Activated CD4-positive, alpha-beta T cell treated with anti-CD3 and anti-CD28 coated beads, Interleukin-2, amount 10 ng/mL, durations not matched to agents 24 days and 14 days (primary cell): ENCODE measurements at regions of chr5 and their contacts with region 1.

Region 1: DNA sequence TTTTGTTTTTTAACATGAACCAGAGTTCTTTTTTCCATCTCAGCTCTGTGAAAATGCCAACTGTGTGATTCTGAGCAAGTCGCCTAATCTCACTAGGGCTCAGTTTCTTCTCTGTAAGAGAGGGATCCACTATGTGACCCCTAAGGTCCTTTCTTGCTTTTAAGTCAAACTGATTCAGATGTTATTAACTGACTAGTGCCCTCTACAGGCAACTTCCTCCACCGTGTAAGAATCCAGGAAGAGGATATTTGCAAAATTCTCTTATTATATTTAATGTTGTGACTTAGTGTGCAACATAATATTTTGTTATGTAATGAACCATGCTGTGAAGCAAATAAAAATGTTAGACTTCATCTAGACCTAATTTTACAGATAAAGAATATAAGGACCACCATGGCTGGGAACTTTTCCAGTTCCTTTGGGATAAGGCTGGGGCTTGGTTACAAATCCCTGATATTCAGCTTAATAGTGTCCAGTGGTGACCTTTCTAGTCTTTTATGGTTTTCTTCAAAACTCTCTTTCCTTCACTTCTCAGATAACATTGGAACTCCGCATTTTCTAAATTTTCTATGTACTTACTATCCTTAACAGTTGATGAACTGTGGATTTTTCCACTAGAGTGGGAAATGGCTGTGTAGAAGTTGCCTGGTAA is 244.7 kb downstream of the PIK3R1 start:
- DNase-seq: peak; percentile 83
- H3K4me3 Mint-ChIP-seq: no peak overlapping the region
- H3K27ac Mint-ChIP-seq: no peak overlapping the region
- H3K4me1 Mint-ChIP-seq: peaks cover 17% of the 10 kb centered on the region
- H3K27me3 Mint-ChIP-seq: peaks cover under 1% of the 10 kb centered on the region

Region 2: GRCh38 chr5:68343421-68343826 is 116.8 kb before region 1 on chr5:
- intact Hi-C with region 1: loop called (anchors 1 kb)
- DNase-seq: peak; percentile 68
- H3K4me3 Mint-ChIP-seq: no peak overlapping the region
- H3K27ac Mint-ChIP-seq: no peak overlapping the region
- H3K4me1 Mint-ChIP-seq: peaks cover 34% of the 10 kb centered on the region
- H3K27me3 Mint-ChIP-seq: peaks cover 18% of the 10 kb centered on the region

Region 3: DNA sequence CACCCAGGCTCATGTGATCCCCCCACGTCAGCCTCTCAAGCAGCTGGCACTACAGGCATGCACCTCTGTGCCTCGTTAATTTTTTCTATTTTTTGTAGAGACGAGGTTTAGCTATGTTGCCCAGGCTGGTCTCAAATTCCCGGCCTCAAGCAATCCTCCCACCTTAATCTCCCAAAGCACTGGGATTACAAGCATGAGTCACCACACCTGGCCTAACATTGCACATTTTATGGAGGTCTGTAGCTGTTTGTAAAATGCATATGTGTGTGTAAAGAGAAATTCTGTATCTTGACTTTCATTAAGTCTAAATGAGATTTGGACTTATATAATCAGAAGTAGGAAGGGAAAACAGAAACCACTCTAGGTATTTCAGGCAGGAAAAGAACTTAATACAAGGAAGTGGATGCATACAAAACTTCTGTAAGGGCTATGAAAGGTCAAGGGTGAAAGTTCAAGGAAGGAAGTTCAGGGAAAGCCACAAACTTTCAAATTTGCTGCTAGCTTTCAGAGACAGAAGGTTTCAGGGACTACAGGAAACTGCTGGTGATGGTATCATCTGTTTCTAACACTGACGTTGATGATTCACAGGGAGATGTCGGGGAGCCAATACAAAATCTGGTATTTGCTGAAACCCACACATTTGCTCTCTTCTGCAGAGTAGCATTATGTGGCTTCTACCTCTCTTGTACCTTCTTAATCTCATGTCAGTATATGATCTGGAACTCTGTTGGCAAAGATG is 35.3 kb before region 1 on chr5:
- intact Hi-C with region 1: loop called (anchors 1 kb)
- DNase-seq: peak; percentile 82
- H3K4me3 Mint-ChIP-seq: peak overlapping the region; percentile 27
- H3K27ac Mint-ChIP-seq: peak overlapping the region; percentile 73
- H3K4me1 Mint-ChIP-seq: peaks cover 46% of the 10 kb centered on the region
- H3K27me3 Mint-ChIP-seq: peaks cover 15% of the 10 kb centered on the region

Region 4: GRCh38 chr5:68441309-68442073 is 18.8 kb before region 1 on chr5:
- intact Hi-C with region 1: loop called (anchors 1 kb)
- DNase-seq: no peak
- H3K4me3 Mint-ChIP-seq: no peak overlapping the region
- H3K27ac Mint-ChIP-seq: peak overlapping the region; percentile 52
- H3K4me1 Mint-ChIP-seq: peaks cover 31% of the 10 kb centered on the region
- H3K27me3 Mint-ChIP-seq: peaks cover 19% of the 10 kb centered on the region